ENCODE measurements at regions of chr1 and their contacts with region 1.

Region 1: GRCh38 chr1:152459596-152460528 is 45.8 kb upstream of the CRNN start:
- H3K4me3 ChIP-seq: no peak overlapping the region
- H3K27ac ChIP-seq: no peak overlapping the region
- H3K4me1 ChIP-seq: no peaks in the 10 kb centered on the region
- CTCF ChIP-seq: 0 out of 2 replicates have a peak, but pooled peaks have one; percentile 30

Region 2: DNA sequence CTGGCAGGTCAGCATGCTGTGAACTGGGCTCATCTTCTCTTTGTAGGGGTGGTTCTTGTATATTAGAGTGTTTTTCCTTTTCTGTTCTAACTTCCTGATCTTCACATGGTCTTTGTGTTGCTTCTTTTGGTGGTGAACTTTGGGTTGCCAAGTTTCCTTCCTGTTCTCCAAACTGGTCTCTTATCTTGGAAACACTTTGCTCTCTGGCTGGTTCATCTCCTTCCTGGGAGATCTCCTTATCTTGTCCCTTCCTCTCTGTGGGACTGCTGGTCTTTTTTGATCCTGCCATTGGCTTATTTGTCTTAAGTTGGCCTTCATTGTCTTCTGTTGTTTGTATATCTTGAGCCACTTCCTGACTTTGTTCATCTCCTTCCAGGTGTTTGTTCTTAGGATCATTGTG is 373.1 kb before region 1 on chr1:
- CTCF ChIA-PET with region 1: interaction called, 14 read pairs
- POLR2A ChIA-PET with region 1: no interaction called
- H3K4me3 ChIP-seq: no peak overlapping the region
- H3K27ac ChIP-seq: no peak overlapping the region
- H3K4me1 ChIP-seq: no peaks in the 10 kb centered on the region
- CTCF ChIP-seq: no peak

Region 3: GRCh38 chr1:152148981-152149380 is 310.9 kb before region 1 on chr1:
- CTCF ChIA-PET with region 1: interaction called, 32 read pairs
- POLR2A ChIA-PET with region 1: no interaction called
- H3K4me3 ChIP-seq: no peak overlapping the region
- H3K27ac ChIP-seq: no peak overlapping the region
- H3K4me1 ChIP-seq: no peaks in the 10 kb centered on the region
- CTCF ChIP-seq: no peak

Region 4: GRCh38 chr1:152198982-152199381 is 260.9 kb before region 1 on chr1:
- CTCF ChIA-PET with region 1: interaction called, 49 read pairs
- POLR2A ChIA-PET with region 1: no interaction called
- H3K4me3 ChIP-seq: no peak overlapping the region
- H3K27ac ChIP-seq: no peak overlapping the region
- H3K4me1 ChIP-seq: no peaks in the 10 kb centered on the region
- CTCF ChIP-seq: no peak

Region 5: DNA sequence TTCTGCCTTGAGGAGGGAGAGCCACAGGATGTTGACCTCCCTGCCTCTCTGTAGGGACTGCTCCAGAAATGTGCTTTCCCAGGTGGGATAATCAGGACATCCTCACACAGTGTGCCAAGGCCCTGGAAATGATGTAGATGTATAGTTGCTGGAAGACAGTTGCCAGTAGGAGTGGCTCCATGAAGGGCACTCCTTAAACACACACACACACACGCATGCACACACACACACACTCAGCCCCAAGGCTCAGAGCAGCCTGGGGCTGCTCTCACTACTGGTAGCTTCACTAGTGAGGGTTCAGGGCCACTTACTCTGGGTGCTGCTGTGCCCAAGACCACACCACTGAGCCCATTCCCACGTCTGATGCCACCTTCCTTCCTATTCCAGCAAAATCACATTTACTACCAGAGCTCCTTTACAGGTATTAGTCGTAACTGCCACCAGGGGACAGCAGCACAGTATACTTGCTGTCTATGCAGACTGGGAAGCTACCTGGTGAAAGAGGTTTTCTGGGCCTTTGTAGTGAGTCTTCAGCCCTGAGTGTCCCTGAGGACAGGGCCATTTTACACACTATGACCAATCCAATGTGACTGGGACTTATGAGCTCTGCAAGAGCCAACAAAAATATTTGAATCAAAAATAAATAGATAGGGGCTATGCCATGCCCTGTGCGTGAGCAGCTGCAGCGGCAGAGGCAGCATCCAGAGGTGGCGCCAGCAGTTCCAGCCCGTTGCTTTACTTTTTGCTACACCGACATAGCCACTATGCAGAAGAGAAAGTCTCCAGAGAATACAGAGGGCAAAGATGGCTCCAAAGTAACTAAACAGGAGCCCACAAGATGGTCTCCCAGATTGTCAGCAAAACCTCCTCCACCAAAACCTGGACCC is 60.8 kb before region 1 on chr1:
- CTCF ChIA-PET with region 1: interaction called, 51 read pairs
- POLR2A ChIA-PET with region 1: no interaction called
- H3K4me3 ChIP-seq: no peak overlapping the region
- H3K27ac ChIP-seq: no peak overlapping the region
- H3K4me1 ChIP-seq: peaks cover 6% of the 10 kb centered on the region
- CTCF ChIP-seq: peak; percentile 26; the same call in 1 of the 2 replicates

Region 6: GRCh38 chr1:152473887-152474537 is 14.2 kb after region 1 on chr1:
- CTCF ChIA-PET with region 1: interaction called, 22 read pairs
- POLR2A ChIA-PET with region 1: no interaction called
- H3K4me3 ChIP-seq: no peak overlapping the region
- H3K27ac ChIP-seq: no peak overlapping the region
- H3K4me1 ChIP-seq: no peaks in the 10 kb centered on the region
- CTCF ChIP-seq: no peak

Region 7: GRCh38 chr1:152582647-152583046 is 122.8 kb after region 1 on chr1:
- CTCF ChIA-PET with region 1: no interaction called
- POLR2A ChIA-PET with region 1: no interaction called
- H3K4me3 ChIP-seq: no peak overlapping the region
- H3K27ac ChIP-seq: no peak overlapping the region
- H3K4me1 ChIP-seq: no peaks in the 10 kb centered on the region
- CTCF ChIP-seq: no peak